ENCODE measurements at regions of chr1 and their contacts with region 1.

Region 1: GRCh38 chr1:43814401-43814800 is 107.1 kb downstream of the ST3GAL3 start:
- DNase-seq: no peak
- H3K4me3 ChIP-seq: no peak overlapping the region
- H3K27ac ChIP-seq: no peak overlapping the region
- H3K4me1 ChIP-seq: no peaks in the 10 kb centered on the region
- H3K27me3 ChIP-seq: no peaks in the 10 kb centered on the region
- CTCF ChIP-seq: no peak
- EP300 ChIP-seq: no peak
- POLR2A ChIP-seq: no peak

Region 2: GRCh38 chr1:42700006-42700405 is 1114.4 kb before region 1 on chr1:
- in situ Hi-C with region 1: no loop called
- intact Hi-C with region 1: no loop called
- DNase-seq: no peak
- H3K4me3 ChIP-seq: no peak overlapping the region
- H3K27ac ChIP-seq: no peak overlapping the region
- H3K4me1 ChIP-seq: peaks cover 0 to 5% (median 0%) of the 10 kb centered on the region in 4 donors
- H3K27me3 ChIP-seq: no peaks in the 10 kb centered on the region
- CTCF ChIP-seq: no peak
- EP300 ChIP-seq: no peak
- POLR2A ChIP-seq: no peak

Region 3: GRCh38 chr1:43466403-43466802 is 348.0 kb before region 1 on chr1:
- in situ Hi-C with region 1: no loop called
- intact Hi-C with region 1: no loop called
- DNase-seq: no peak
- H3K4me3 ChIP-seq: no peak overlapping the region
- H3K27ac ChIP-seq: no peak overlapping the region
- H3K4me1 ChIP-seq: peaks cover 0 to 4% (median 0%) of the 10 kb centered on the region in 4 donors
- H3K27me3 ChIP-seq: no peaks in the 10 kb centered on the region
- CTCF ChIP-seq: no peak
- EP300 ChIP-seq: no peak
- POLR2A ChIP-seq: no peak

Region 4: DNA sequence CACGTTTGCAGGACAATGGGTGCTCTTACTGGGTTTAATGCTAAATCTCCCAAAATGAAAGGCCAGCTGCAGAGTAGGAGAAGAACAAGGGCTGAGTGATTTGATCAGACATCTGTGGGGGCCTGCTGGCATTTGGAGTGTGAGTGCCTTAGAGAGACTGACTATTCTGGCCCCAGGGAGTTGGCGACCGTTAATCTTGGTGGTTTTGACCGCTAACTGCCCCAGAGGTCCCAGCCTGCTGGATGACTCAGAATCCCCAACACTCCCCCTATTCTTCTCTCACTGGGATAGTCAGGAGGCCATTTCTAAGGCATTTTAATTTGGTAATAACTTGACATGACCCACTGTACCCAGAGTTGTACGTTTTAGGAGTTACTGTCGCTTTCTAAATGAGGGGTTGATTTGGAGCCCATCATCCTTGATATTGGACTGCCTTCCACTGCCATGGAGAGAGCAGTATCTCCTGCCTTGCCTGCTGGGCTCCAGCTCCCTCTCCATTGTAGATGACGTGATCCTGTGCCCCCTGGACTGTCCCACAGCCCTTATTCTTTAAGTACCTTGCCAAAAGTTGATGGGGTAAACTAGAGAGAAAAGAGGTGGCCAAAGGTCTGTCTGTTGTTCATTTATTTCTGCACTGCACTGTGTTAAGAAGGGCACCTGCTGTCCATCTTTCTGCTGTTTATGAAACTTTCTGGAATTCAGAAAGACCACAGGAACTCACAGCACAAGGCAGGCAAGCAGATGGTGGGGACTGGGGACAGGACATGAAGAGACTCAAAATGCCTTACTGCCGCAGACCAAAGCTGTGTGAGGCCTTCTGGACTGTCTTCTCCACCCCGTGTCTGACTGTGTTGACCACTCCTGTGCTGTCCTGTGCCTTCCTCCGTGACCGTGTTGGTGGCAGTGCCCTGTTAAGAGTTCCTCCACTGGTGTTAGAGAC is 21.0 kb after region 1 on chr1:
- in situ Hi-C with region 1: no loop called
- intact Hi-C with region 1: loop called (anchors 2 kb)
- DNase-seq: no peak
- H3K4me3 ChIP-seq: no peak overlapping the region
- H3K27ac ChIP-seq: peak overlapping the region; percentile 40 to 71 (median 50)
- H3K4me1 ChIP-seq: peaks cover 13 to 27% (median 20%) of the 10 kb centered on the region in 4 donors
- H3K27me3 ChIP-seq: no peaks in the 10 kb centered on the region
- CTCF ChIP-seq: no peak
- EP300 ChIP-seq: no peak
- POLR2A ChIP-seq: no peak

Region 5: DNA sequence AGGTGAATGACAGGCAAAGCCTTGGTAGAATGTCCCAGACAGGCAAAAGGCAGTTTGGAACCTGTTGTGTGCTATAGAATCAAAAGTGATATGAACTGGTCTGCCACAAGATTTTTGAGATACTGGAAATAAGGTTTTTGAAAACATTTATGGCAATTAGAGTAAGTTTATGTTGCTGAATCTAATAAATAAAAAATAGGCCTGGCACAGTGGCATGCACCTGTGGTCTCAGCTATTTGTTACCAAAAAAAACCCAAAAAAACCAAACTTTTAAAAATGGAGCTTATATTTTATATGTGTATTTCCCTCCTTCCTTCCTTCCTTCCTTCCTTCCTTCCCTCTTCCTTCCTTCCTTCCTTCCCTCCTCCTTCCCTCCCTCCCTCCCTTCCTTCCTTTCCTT is 42.8 kb after region 1 on chr1:
- in situ Hi-C with region 1: no loop called
- intact Hi-C with region 1: loop called (anchors 1 kb)
- DNase-seq: no peak
- H3K4me3 ChIP-seq: no peak overlapping the region
- H3K27ac ChIP-seq: no peak overlapping the region
- H3K4me1 ChIP-seq: peaks cover 3 to 17% (median 15%) of the 10 kb centered on the region in 4 donors
- H3K27me3 ChIP-seq: no peaks in the 10 kb centered on the region
- CTCF ChIP-seq: no peak
- EP300 ChIP-seq: no peak
- POLR2A ChIP-seq: no peak

Region 6: GRCh38 chr1:44108241-44108640 is 293.8 kb after region 1 on chr1:
- in situ Hi-C with region 1: no loop called
- intact Hi-C with region 1: no loop called
- DNase-seq: no peak
- H3K4me3 ChIP-seq: no peak overlapping the region
- H3K27ac ChIP-seq: no peak overlapping the region
- H3K4me1 ChIP-seq: no peaks in the 10 kb centered on the region
- H3K27me3 ChIP-seq: peaks cover 17% of the 10 kb centered on the region
- CTCF ChIP-seq: no peak
- EP300 ChIP-seq: no peak
- POLR2A ChIP-seq: no peak